ENCODE measurements at regions of chr11 and their contacts with region 1.

Region 1: DNA sequence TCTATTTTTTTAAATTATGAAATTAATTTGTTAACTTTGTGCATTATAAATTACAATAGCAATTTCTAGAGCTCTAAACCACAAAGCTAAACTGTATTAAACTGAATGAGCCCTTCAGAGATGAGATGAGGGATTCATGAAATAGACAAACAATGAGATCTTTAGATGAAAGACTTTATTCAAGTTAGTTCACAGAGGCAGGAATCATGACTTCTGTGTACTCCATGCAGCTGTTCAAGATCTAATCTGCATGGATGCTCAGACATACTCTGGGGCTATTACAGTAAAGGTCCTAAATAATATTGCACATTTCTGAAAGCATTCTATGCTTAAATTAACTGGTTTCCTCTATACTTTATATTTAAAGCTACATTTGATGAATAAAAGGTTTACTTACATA is 122.7 kb downstream of the FCHSD2 start:
- DNase-seq: no peak
- ATAC-seq: no peak
- H3K4me3 ChIP-seq: no peak overlapping the region
- H3K4me3 Mint-ChIP-seq: no peak overlapping the region
- H3K27ac ChIP-seq: peak overlapping the region in 1 of 2 donors; percentile 64
- H3K27ac Mint-ChIP-seq: no peak overlapping the region
- H3K4me1 ChIP-seq: peaks cover 19 to 37% of the 10 kb centered on the region in 2 donors
- H3K4me1 Mint-ChIP-seq: peaks cover 58% of the 10 kb centered on the region
- H3K27me3 ChIP-seq: no peaks in the 10 kb centered on the region
- H3K27me3 Mint-ChIP-seq: no peaks in the 10 kb centered on the region
- CTCF ChIP-seq: no peak

Region 2: GRCh38 chr11:73040046-73040445 is 20.6 kb after region 1 on chr11:
- CTCF ChIA-PET with region 1: no interaction called
- POLR2A ChIA-PET with region 1: no interaction called
- intact Hi-C with region 1: loop called (anchors 2 kb)
- DNase-seq: no peak
- ATAC-seq: no peak
- H3K4me3 ChIP-seq: no peak overlapping the region
- H3K4me3 Mint-ChIP-seq: no peak overlapping the region
- H3K27ac ChIP-seq: peak overlapping the region in 1 of 2 donors; percentile 56
- H3K27ac Mint-ChIP-seq: no peak overlapping the region
- H3K4me1 ChIP-seq: peaks cover 19 to 34% of the 10 kb centered on the region in 2 donors
- H3K4me1 Mint-ChIP-seq: peaks cover 62% of the 10 kb centered on the region
- H3K27me3 ChIP-seq: no peaks in the 10 kb centered on the region
- H3K27me3 Mint-ChIP-seq: no peaks in the 10 kb centered on the region
- CTCF ChIP-seq: no peak

Region 3: DNA sequence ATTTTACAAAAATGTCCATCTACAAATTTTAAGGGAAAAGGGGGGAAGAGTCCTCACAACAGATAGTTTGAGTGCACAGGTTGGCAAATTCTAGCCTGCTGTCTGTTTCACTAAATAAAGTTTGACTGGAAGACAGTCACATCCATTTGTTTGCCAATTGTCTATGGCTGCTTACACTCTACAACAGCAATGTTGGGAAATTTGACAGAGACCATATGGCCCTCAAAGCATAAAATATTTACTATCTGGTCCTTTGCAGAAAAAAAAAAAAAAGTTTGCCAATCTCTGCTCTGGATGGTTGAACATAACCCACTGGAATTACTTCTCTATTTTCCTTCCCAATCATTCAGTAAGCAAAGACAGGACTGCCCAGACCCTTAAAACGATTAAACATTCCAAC is 34.5 kb after region 1 on chr11:
- CTCF ChIA-PET with region 1: no interaction called
- POLR2A ChIA-PET with region 1: interaction called, 3 read pairs
- intact Hi-C with region 1: loop called (anchors 5 kb)
- DNase-seq: no peak
- ATAC-seq: no peak
- H3K4me3 ChIP-seq: no peak overlapping the region
- H3K4me3 Mint-ChIP-seq: no peak overlapping the region
- H3K27ac ChIP-seq: peak overlapping the region in 1 of 2 donors; percentile 81
- H3K27ac Mint-ChIP-seq: peak overlapping the region; percentile 78
- H3K4me1 ChIP-seq: peaks cover 55 to 81% of the 10 kb centered on the region in 2 donors
- H3K4me1 Mint-ChIP-seq: peaks cover 65% of the 10 kb centered on the region
- H3K27me3 ChIP-seq: no peaks in the 10 kb centered on the region
- H3K27me3 Mint-ChIP-seq: no peaks in the 10 kb centered on the region
- CTCF ChIP-seq: no peak